ENCODE measurements at regions of chr6 and their contacts with region 1.

Region 1: DNA sequence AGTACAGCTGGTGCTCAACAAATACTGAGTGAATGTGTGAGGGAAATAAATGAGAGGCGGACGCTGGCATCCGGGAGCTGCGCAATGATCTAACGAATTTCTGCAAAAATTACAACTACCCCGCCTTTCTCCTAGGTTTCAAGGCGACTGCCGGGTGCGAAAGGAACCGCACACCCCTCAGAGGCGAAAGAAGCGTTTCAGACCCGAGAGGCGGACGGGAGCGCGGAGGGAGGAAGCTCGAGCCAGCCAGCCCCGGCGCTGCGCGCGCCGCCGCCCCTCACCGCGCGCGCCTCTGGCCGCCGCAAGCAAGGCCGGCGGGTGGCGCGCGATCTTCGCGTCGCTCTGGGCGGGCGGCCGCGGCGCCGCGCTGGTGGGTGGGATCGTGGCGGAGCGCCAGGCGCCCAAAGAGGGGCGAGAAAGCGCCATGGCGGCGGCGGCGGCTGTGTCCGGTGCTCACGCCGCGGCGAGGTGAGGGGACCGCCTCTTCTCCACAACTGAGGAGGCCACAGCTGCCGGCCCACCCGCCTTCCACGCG is at the start of gene BLTP3A:
- DNase-seq: peak; percentile 92 to 96 (median 96)
- ATAC-seq: peak; percentile 93
- H3K4me3 ChIP-seq: peak within 1 kb of the TSS; percentile 68
- H3K27ac ChIP-seq: peak within 1 kb of the TSS; percentile 95
- H3K4me1 ChIP-seq: peaks cover 7 to 14% of the 10 kb centered on the region in 2 experiments; a peak in 3 of 5 replicates
- H3K27me3 ChIP-seq: no peaks in the 10 kb centered on the region
- CTCF ChIP-seq: peak; percentile 10 to 22 (median 15); a peak in 2 of 6 replicates
- EP300 ChIP-seq: no peak
- POLR2A ChIP-seq: peak; percentile 88
- RAD21 ChIP-seq: peak in 1 of 2 experiments; percentile 29; a peak in 3 of 4 replicates
- polyA plus RNA-seq, gene BLTP3A: 7.5 to 7.7 TPM

Region 2: GRCh38 chr6:34496103-34496685 is 295.6 kb before region 1 on chr6:
- CTCF ChIA-PET with region 1: no interaction called
- POLR2A ChIA-PET with region 1: no interaction called
- in situ Hi-C with region 1: no loop called
- intact Hi-C with region 1: no loop called
- DNase-seq: no peak
- ATAC-seq: no peak
- H3K4me3 ChIP-seq: no peak overlapping the region
- H3K27ac ChIP-seq: no peak overlapping the region
- H3K4me1 ChIP-seq: peaks cover 3% of the 10 kb centered on the region in 2 experiments; a peak in 4 of 5 replicates
- H3K27me3 ChIP-seq: no peaks in the 10 kb centered on the region
- CTCF ChIP-seq: no peak
- EP300 ChIP-seq: no peak
- POLR2A ChIP-seq: no peak
- RAD21 ChIP-seq: no peak

Region 3: DNA sequence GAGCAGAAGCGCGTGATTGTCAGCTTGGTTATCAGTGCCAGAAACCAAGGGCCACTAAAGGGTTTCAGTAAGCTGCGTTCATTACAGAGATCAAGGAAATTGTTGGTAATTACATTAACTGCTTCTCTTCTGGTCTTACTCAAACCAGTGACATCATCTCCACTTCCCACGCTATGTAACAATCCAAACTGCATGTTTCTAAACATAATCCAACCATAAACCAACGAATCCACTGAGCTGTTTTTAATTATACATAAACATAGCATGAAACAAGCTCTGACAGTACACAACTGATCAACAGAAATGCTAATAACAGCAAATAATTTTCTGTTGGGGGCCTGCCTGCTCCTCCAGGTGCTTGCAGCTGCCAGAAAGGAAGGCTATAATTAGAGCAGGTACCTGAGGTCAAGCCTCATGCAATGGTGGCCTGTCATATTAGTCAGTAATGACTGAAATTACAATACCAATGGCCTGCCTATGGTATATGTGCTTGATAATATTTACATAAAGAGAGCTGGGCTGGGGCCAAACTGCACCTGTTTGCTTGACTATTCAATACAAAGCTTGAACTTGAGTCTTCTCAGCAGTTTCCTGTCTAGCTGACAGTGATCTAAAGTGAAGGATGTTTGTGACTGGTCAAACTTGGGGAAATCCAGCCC is 135.3 kb before region 1 on chr6:
- CTCF ChIA-PET with region 1: no interaction called
- POLR2A ChIA-PET with region 1: no interaction called
- in situ Hi-C with region 1: no loop called
- intact Hi-C with region 1: loop called (anchors 5 kb)
- DNase-seq: peak in 2 of 4 experiments; percentile 53 to 73
- ATAC-seq: peak; percentile 63
- H3K4me3 ChIP-seq: no peak overlapping the region
- H3K27ac ChIP-seq: peak overlapping the region; percentile 88
- H3K4me1 ChIP-seq: peaks cover 32 to 51% of the 10 kb centered on the region in 2 experiments
- H3K27me3 ChIP-seq: no peaks in the 10 kb centered on the region
- CTCF ChIP-seq: no peak
- EP300 ChIP-seq: 0 out of 2 replicates have a peak, but pooled peaks have one; percentile 12
- POLR2A ChIP-seq: no peak
- RAD21 ChIP-seq: 0 out of 4 replicates have a peak, but pooled peaks of 1 of the 2 experiments have one; percentile 17

Region 4: DNA sequence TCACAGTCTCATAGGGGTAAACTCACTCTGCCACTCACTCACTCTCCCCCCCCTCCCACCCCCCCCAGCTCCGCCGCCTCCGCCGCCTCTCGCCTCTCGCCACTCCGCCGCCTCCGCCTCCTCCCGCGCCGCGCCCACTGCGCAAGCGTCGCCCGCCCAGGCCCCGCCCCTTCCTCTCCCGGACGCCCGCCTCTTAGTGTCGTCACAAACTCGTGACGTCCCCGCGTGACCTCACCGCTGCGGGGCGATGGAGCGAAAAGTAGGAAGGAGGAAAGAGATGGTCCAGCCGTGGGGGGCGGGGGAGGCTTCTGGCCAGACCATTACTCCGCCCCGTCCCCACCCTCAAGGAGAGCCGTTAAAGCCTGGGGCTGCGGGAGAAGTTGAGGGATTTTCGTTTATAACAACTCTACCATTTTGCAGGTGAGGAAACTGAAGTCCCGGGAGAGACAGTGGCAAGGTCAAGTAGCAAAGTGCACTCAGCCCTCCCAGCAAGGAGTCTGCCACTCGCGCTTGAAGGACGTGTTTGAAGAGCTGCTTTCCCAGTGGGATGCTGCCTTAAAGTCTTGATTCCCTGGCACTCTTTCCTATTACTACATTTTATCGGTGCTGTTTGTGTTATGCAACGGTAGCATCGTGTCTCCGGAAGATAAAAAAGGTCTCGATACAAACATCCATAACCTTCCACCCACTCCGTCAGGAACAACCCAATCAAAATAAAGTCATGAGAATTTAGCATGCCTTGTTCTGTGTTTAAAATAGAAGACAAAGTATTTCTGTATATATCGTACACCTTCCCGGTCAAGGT is 94.8 kb before region 1 on chr6 and contains the start of gene ILRUN:
- CTCF ChIA-PET with region 1: interaction called, 4 read pairs
- POLR2A ChIA-PET with region 1: no interaction called
- in situ Hi-C with region 1: no loop called
- intact Hi-C with region 1: loop called (anchors 5 kb)
- DNase-seq: peak; percentile 96 to 100 (median 98)
- ATAC-seq: peak; percentile 89
- H3K4me3 ChIP-seq: peak within 1 kb of the TSS; percentile 98
- H3K27ac ChIP-seq: peak within 1 kb of the TSS; percentile 89
- H3K4me1 ChIP-seq: peaks cover 17 to 22% of the 10 kb centered on the region in 2 experiments; a peak in 4 of 5 replicates
- H3K27me3 ChIP-seq: no peaks in the 10 kb centered on the region
- CTCF ChIP-seq: no peak
- EP300 ChIP-seq: no peak
- POLR2A ChIP-seq: peak; percentile 84
- RAD21 ChIP-seq: peak; percentile 7 to 14; a peak in 2 of 4 replicates
- polyA plus RNA-seq, gene ILRUN: 24.9 to 30.7 TPM

Region 5: DNA sequence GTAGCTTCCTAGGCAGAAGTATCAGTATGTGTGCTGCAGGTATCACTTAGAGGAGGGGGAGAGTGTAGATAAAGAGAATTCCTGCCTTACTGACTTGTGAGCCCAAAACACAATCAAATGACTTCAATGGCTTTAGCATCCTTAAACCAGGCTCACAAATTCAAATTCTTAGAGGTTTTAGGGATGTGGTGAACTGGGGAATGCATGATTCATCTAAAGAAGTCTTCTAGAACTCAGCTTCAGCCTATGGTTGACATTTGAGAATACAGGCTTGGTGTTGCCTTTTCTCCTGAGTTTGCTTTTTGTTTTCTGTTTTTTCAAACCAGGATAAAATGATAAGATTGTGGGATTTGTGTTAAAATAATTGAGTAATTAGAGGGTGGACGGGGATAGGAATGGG is 20.0 kb before region 1 on chr6:
- CTCF ChIA-PET with region 1: no interaction called
- POLR2A ChIA-PET with region 1: interaction called, 45 read pairs
- in situ Hi-C with region 1: no loop called
- intact Hi-C with region 1: no loop called
- DNase-seq: no peak
- ATAC-seq: no peak
- H3K4me3 ChIP-seq: no peak overlapping the region
- H3K27ac ChIP-seq: no peak overlapping the region
- H3K4me1 ChIP-seq: no peaks in the 10 kb centered on the region; a peak in 1 of 5 replicates
- H3K27me3 ChIP-seq: no peaks in the 10 kb centered on the region
- CTCF ChIP-seq: no peak
- EP300 ChIP-seq: no peak
- POLR2A ChIP-seq: no peak
- RAD21 ChIP-seq: no peak

Region 6: GRCh38 chr6:34806738-34807453 is 15.1 kb after region 1 on chr6:
- CTCF ChIA-PET with region 1: interaction called, 4 read pairs
- POLR2A ChIA-PET with region 1: interaction called, 56 read pairs
- in situ Hi-C with region 1: no loop called
- intact Hi-C with region 1: no loop called
- DNase-seq: no peak
- ATAC-seq: no peak
- H3K4me3 ChIP-seq: no peak overlapping the region
- H3K27ac ChIP-seq: no peak overlapping the region
- H3K4me1 ChIP-seq: no peaks in the 10 kb centered on the region; a peak in 2 of 5 replicates
- H3K27me3 ChIP-seq: no peaks in the 10 kb centered on the region
- CTCF ChIP-seq: no peak
- EP300 ChIP-seq: no peak
- POLR2A ChIP-seq: no peak
- RAD21 ChIP-seq: no peak

Region 7: GRCh38 chr6:34867484-34867883 is 75.7 kb after region 1 on chr6:
- CTCF ChIA-PET with region 1: no interaction called
- POLR2A ChIA-PET with region 1: no interaction called
- in situ Hi-C with region 1: no loop called
- intact Hi-C with region 1: loop called (anchors 5 kb)
- DNase-seq: peak in 2 of 4 experiments; percentile 7 to 23
- ATAC-seq: no peak
- H3K4me3 ChIP-seq: no peak overlapping the region
- H3K27ac ChIP-seq: no peak overlapping the region
- H3K4me1 ChIP-seq: peaks cover 4 to 11% of the 10 kb centered on the region in 2 experiments; a peak in 4 of 5 replicates
- H3K27me3 ChIP-seq: no peaks in the 10 kb centered on the region
- CTCF ChIP-seq: peak in 1 of 3 experiments; percentile 29; a peak in 2 of 6 replicates
- EP300 ChIP-seq: no peak
- POLR2A ChIP-seq: no peak
- RAD21 ChIP-seq: peak in 1 of 2 experiments; percentile 25; a peak in 1 of 4 replicates

Region 8: GRCh38 chr6:34964564-34964963 is 172.8 kb after region 1 on chr6:
- CTCF ChIA-PET with region 1: no interaction called
- POLR2A ChIA-PET with region 1: no interaction called
- in situ Hi-C with region 1: no loop called
- intact Hi-C with region 1: loop called (anchors 10 kb)
- DNase-seq: no peak
- ATAC-seq: no peak
- H3K4me3 ChIP-seq: no peak overlapping the region
- H3K27ac ChIP-seq: no peak overlapping the region
- H3K4me1 ChIP-seq: peaks cover 4% of the 10 kb centered on the region in 2 experiments; a peak in 4 of 5 replicates
- H3K27me3 ChIP-seq: no peaks in the 10 kb centered on the region
- CTCF ChIP-seq: no peak
- EP300 ChIP-seq: no peak
- POLR2A ChIP-seq: no peak
- RAD21 ChIP-seq: no peak